CD8-positive, alpha-beta memory T cell (primary cell): ENCODE measurements at regions of chr7 and their contacts with region 1.

Region 1: GRCh38 chr7:47991741-47992311 is 12.4 kb upstream of the HUS1 start:
- DNase-seq: peak; percentile 73 to 91 (median 81)
- H3K4me3 ChIP-seq: peak overlapping the region; percentile 73
- H3K4me3 Mint-ChIP-seq: peak overlapping the region; percentile 83 to 99 (median 94)
- H3K27ac ChIP-seq: peak overlapping the region; percentile 62
- H3K27ac Mint-ChIP-seq: peak overlapping the region; percentile 80 to 99 (median 96)
- H3K4me1 ChIP-seq: peaks cover 19% of the 10 kb centered on the region
- H3K4me1 Mint-ChIP-seq: peaks cover 16 to 20% (median 16%) of the 10 kb centered on the region in 3 donors
- H3K27me3 ChIP-seq: no peaks in the 10 kb centered on the region
- H3K27me3 Mint-ChIP-seq: peaks cover 0 to 4% of the 10 kb centered on the region in 2 donors

Region 2: GRCh38 chr7:47893247-47893646 is 98.6 kb before region 1 on chr7:
- CTCF ChIA-PET with region 1: no interaction called
- POLR2A ChIA-PET with region 1: no interaction called
- DNase-seq: no peak
- H3K4me3 ChIP-seq: no peak overlapping the region
- H3K4me3 Mint-ChIP-seq: no peak overlapping the region
- H3K27ac ChIP-seq: no peak overlapping the region
- H3K27ac Mint-ChIP-seq: no peak overlapping the region
- H3K4me1 ChIP-seq: no peaks in the 10 kb centered on the region
- H3K4me1 Mint-ChIP-seq: no peaks in the 10 kb centered on the region
- H3K27me3 ChIP-seq: no peaks in the 10 kb centered on the region
- H3K27me3 Mint-ChIP-seq: peaks cover 1 to 8% of the 10 kb centered on the region in 2 donors

Region 3: DNA sequence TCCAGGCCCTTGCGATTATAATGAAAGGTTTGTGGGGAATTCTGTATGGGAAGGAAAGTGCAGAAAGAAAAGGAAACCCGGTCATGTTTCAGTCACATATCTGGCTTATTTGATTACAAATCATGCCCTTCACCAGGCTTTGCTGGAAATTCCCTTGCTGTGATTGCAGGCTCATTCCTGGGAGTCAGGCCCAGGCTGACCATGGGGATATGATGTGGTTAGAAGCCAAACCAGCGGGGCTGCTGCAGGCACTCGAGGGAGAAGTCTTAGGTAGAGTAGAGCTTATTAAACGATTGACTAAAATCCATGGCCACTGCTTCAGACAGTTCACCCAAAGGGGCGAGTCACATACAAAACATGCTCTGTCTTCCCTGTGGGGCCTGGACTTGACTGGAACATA is 59.8 kb before region 1 on chr7:
- CTCF ChIA-PET with region 1: no interaction called
- POLR2A ChIA-PET with region 1: no interaction called
- DNase-seq: no peak
- H3K4me3 ChIP-seq: no peak overlapping the region
- H3K4me3 Mint-ChIP-seq: no peak overlapping the region
- H3K27ac ChIP-seq: no peak overlapping the region
- H3K27ac Mint-ChIP-seq: no peak overlapping the region
- H3K4me1 ChIP-seq: no peaks in the 10 kb centered on the region
- H3K4me1 Mint-ChIP-seq: no peaks in the 10 kb centered on the region
- H3K27me3 ChIP-seq: no peaks in the 10 kb centered on the region
- H3K27me3 Mint-ChIP-seq: peaks cover 0 to 2% of the 10 kb centered on the region in 2 donors

Region 4: DNA sequence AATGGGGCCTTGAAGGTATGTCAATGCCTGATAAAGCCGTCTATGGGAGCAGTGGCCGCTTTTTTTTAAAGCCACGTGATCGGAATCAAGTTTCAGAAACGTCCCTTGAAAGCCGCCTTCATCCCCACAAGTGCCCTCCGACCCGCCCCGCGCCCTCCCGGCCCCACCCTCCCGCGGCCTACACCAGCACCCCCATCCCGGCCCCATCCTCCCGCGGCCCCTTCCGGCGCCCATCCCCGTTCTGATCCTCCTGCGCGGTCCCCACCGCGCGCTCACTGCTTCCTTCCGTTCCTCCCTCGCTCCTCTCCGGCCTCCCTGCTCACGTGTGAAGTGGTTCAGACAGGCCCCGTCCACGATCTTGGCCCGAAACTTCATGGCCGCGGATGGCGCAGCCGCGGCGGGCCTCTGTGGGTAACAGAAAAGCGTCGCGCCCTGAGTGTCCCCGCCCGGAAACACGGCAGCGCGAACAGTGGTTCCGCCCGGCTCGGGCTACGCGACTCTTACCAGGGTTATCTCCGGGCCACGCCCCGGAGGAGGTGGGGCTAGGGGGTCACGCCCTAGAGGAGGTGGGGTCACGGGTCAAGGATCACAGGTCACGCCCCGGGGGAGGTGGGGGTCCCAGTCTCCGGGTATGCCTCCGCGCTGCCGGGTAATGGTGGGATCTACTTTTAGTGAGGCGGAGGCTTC is 12.5 kb before region 1 on chr7 and contains the start of gene HUS1:
- CTCF ChIA-PET with region 1: interaction called, 11 read pairs
- POLR2A ChIA-PET with region 1: no interaction called
- DNase-seq: peak; percentile 85 to 96 (median 87)
- H3K4me3 ChIP-seq: peak within 1 kb of the TSS; percentile 52
- H3K4me3 Mint-ChIP-seq: peak within 1 kb of the TSS; percentile 88 to 99 (median 94)
- H3K27ac ChIP-seq: peak within 1 kb of the TSS; percentile 86
- H3K27ac Mint-ChIP-seq: peak within 1 kb of the TSS; percentile 86 to 100 (median 98)
- H3K4me1 ChIP-seq: peaks cover 12% of the 10 kb centered on the region
- H3K4me1 Mint-ChIP-seq: peaks cover 20 to 40% (median 37%) of the 10 kb centered on the region in 3 donors
- H3K27me3 ChIP-seq: no peaks in the 10 kb centered on the region
- H3K27me3 Mint-ChIP-seq: no peaks in the 10 kb centered on the region
- total RNA-seq, gene HUS1: 64.9 to 65.0 TPM

Region 5: GRCh38 chr7:48088559-48089045 is 96.8 kb after region 1 on chr7:
- CTCF ChIA-PET with region 1: interaction called, 70 read pairs
- POLR2A ChIA-PET with region 1: interaction called, 11 read pairs
- DNase-seq: no peak
- H3K4me3 ChIP-seq: peak overlapping the region; percentile 74
- H3K4me3 Mint-ChIP-seq: peak overlapping the region; percentile 90 to 98 (median 91)
- H3K27ac ChIP-seq: peak overlapping the region; percentile 81
- H3K27ac Mint-ChIP-seq: peak overlapping the region; percentile 89 to 98 (median 95)
- H3K4me1 ChIP-seq: peaks cover 76% of the 10 kb centered on the region
- H3K4me1 Mint-ChIP-seq: peaks cover 76 to 86% (median 81%) of the 10 kb centered on the region in 3 donors
- H3K27me3 ChIP-seq: no peaks in the 10 kb centered on the region
- H3K27me3 Mint-ChIP-seq: no peaks in the 10 kb centered on the region

Region 6: DNA sequence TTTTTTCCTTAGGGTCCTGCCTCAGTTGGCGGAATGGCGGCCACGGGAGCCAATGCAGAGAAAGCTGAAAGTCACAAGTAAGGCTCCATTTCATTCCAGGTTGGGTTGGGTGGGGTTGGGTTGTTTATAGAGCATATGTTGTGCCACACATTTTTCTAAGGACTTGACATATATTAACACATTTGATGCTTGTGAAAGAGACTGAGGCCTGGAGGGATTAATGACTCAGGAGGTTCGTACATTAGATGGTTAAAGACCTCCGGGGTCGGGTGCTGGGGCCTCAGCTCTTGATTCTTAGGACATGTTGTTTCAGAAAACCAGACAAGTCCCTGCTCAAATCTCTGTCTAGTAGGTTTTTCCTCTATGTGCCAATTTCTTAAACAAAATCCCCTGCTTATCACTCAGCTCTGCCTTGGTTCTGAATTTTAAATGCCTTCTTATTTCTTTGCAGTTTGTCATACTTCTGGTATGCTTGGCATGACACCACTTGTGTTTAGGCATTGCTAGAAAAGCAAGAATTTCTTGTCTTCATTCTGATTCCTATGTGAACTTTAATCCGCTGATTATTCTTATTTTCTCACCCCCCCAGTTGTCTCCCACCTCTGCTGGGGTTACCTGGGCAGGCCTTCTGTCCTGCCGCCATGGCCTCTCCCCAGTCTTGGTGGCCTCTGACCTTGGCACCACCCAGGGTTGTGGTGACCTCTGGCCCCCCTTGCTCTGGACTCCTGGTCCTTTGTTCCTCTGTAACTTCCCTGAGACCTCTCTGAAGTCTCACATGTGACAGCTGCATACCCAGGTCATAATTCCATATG is 103.1 kb after region 1 on chr7:
- CTCF ChIA-PET with region 1: interaction called, 70 read pairs
- POLR2A ChIA-PET with region 1: interaction called, 11 read pairs
- DNase-seq: no peak
- H3K4me3 ChIP-seq: no peak overlapping the region
- H3K4me3 Mint-ChIP-seq: peak overlapping the region in 5 of 7 donors; percentile 0 to 90 (median 29)
- H3K27ac ChIP-seq: no peak overlapping the region
- H3K27ac Mint-ChIP-seq: peak overlapping the region; percentile 4 to 97 (median 66)
- H3K4me1 ChIP-seq: peaks cover 76% of the 10 kb centered on the region
- H3K4me1 Mint-ChIP-seq: peaks cover 90 to 95% (median 92%) of the 10 kb centered on the region in 3 donors
- H3K27me3 ChIP-seq: no peaks in the 10 kb centered on the region
- H3K27me3 Mint-ChIP-seq: no peaks in the 10 kb centered on the region